ENCODE measurements at regions of chr19 and their contacts with region 1.

Region 1: GRCh38 chr19:20423381-20424197 is 142.0 kb downstream of the ZNF737 start:
- DNase-seq: peak; percentile 24
- ATAC-seq: no peak
- H3K4me3 Mint-ChIP-seq: peak overlapping the region; percentile 99
- H3K27ac Mint-ChIP-seq: peak overlapping the region; percentile 98
- H3K4me1 Mint-ChIP-seq: peaks cover 15% of the 10 kb centered on the region
- H3K27me3 Mint-ChIP-seq: no peaks in the 10 kb centered on the region
- CTCF ChIP-seq: no peak

Region 2: DNA sequence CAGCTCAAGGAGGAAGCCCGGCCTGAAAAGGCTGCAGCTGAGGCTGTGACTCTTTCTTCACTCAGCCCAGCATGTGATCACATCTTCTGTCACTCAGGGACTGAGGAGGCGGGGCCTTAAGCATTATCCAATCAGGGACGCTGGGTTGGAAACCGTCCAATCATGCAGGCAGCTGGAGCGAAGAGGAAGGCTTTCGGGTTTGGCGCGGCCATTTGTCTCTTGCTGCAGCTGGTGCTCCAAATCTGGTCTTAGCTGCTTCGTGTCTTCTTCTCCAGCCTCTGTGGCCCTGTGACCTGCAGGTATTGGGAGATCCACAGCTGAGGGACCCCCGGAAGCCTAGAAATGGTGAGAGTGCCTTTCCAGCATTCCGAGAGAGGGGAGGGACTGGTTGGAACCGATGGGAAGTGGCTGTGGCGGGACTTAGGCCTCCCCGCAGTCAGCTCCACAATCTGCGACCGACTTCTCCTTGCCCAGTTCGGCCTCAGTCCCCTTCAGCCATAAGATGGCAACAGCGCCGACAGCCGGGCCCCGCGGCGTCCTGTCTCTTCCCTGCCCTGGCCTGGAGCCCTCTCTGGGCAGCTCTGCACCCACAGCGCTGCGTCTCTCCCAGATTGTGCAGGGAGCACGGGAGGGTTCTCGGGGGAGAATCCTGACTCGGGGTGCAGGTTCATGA is 345.7 kb before region 1 on chr19 and contains the start of gene ZNF90:
- CTCF ChIA-PET with region 1: no interaction called
- POLR2A ChIA-PET with region 1: interaction called, 13 read pairs
- intact Hi-C with region 1: loop called (anchors 10 kb)
- DNase-seq: peak; percentile 73
- ATAC-seq: peak; percentile 99
- H3K4me3 Mint-ChIP-seq: peak within 1 kb of the TSS; percentile 96
- H3K27ac Mint-ChIP-seq: peak within 1 kb of the TSS; percentile 69
- H3K4me1 Mint-ChIP-seq: peaks cover 18% of the 10 kb centered on the region
- H3K27me3 Mint-ChIP-seq: no peaks in the 10 kb centered on the region
- CTCF ChIP-seq: no peak
- total RNA-seq, gene ZNF90: 9.8 and 12.5 TPM in 2 replicates

Region 3: GRCh38 chr19:20565321-20566018 is 141.9 kb after region 1 on chr19 and contains the start of gene ZNF737:
- CTCF ChIA-PET with region 1: no interaction called
- POLR2A ChIA-PET with region 1: interaction called, 40 read pairs
- intact Hi-C with region 1: loop called (anchors 2 kb)
- DNase-seq: peak; percentile 72
- ATAC-seq: peak; percentile 90
- H3K4me3 Mint-ChIP-seq: peak within 1 kb of the TSS; percentile 99
- H3K27ac Mint-ChIP-seq: peak within 1 kb of the TSS; percentile 99
- H3K4me1 Mint-ChIP-seq: peaks cover 32% of the 10 kb centered on the region
- H3K27me3 Mint-ChIP-seq: no peaks in the 10 kb centered on the region
- CTCF ChIP-seq: no peak
- total RNA-seq, gene ZNF737: 42.7 and 50.9 TPM in 2 replicates

Region 4: GRCh38 chr19:20776083-20777076 is 352.8 kb after region 1 on chr19 and contains the start of gene ZNF66:
- CTCF ChIA-PET with region 1: no interaction called
- POLR2A ChIA-PET with region 1: interaction called, 16 read pairs
- intact Hi-C with region 1: loop called (anchors 2 kb)
- DNase-seq: peak; percentile 85
- ATAC-seq: peak; percentile 98
- H3K4me3 Mint-ChIP-seq: peak within 1 kb of the TSS; percentile 98
- H3K27ac Mint-ChIP-seq: peak within 1 kb of the TSS; percentile 91
- H3K4me1 Mint-ChIP-seq: peaks cover 10% of the 10 kb centered on the region
- H3K27me3 Mint-ChIP-seq: no peaks in the 10 kb centered on the region
- CTCF ChIP-seq: no peak
- total RNA-seq, gene ZNF66: 17.5 and 19.1 TPM in 2 replicates

Region 5: GRCh38 chr19:21740559-21740958 is 1317.0 kb after region 1 on chr19:
- CTCF ChIA-PET with region 1: no interaction called
- POLR2A ChIA-PET with region 1: interaction called, 14 read pairs
- intact Hi-C with region 1: no loop called
- DNase-seq: no peak
- ATAC-seq: no peak
- H3K4me3 Mint-ChIP-seq: no peak overlapping the region
- H3K27ac Mint-ChIP-seq: no peak overlapping the region
- H3K4me1 Mint-ChIP-seq: no peaks in the 10 kb centered on the region
- H3K27me3 Mint-ChIP-seq: no peaks in the 10 kb centered on the region
- CTCF ChIP-seq: no peak

Region 6: DNA sequence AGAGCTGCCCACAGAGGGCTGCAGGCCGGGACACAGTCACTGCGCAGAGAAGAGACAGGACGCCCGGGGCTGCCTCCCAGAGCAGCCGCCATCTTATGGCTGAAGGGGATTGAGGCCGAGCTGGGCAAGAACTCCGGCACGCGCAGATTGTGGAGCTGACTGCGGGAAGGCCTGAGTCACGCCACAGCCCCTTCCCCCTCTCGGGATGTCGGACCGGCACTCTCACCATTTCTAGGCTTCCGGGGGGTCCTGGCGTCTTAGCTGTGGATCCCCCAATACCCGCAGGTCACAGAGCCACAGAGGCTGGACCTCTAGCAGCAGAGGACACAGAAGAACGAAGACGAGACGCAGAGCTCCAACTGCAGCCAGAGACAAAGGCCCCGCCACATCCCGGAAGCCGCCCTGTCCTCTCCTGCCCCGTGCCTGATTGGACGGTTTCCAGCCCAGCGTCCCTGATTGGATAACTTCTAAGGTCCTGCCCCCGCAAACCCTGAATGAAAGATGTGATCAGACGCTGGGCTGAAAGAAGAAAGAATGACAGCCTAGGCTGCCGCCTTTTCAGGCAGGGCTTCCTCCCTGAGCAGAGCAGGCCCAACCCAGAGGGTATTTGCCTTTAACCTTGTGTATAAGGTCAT is 1412.3 kb after region 1 on chr19 and contains the start of gene ZNF43:
- CTCF ChIA-PET with region 1: no interaction called
- POLR2A ChIA-PET with region 1: no interaction called
- intact Hi-C with region 1: loop called (anchors 10 kb)
- DNase-seq: peak; percentile 77
- ATAC-seq: peak; percentile 98
- H3K4me3 Mint-ChIP-seq: peak within 1 kb of the TSS; percentile 100
- H3K27ac Mint-ChIP-seq: peak within 1 kb of the TSS; percentile 100
- H3K4me1 Mint-ChIP-seq: peaks cover 38% of the 10 kb centered on the region
- H3K27me3 Mint-ChIP-seq: no peaks in the 10 kb centered on the region
- CTCF ChIP-seq: no peak
- total RNA-seq, gene ZNF43: 41.8 and 52.4 TPM in 2 replicates

Measured in activated B cell treated with CpG ODN at 0.5 μM for 24 hours (primary cell).